ENCODE measurements at regions of chr9 and their contacts with region 1.

Region 1: DNA sequence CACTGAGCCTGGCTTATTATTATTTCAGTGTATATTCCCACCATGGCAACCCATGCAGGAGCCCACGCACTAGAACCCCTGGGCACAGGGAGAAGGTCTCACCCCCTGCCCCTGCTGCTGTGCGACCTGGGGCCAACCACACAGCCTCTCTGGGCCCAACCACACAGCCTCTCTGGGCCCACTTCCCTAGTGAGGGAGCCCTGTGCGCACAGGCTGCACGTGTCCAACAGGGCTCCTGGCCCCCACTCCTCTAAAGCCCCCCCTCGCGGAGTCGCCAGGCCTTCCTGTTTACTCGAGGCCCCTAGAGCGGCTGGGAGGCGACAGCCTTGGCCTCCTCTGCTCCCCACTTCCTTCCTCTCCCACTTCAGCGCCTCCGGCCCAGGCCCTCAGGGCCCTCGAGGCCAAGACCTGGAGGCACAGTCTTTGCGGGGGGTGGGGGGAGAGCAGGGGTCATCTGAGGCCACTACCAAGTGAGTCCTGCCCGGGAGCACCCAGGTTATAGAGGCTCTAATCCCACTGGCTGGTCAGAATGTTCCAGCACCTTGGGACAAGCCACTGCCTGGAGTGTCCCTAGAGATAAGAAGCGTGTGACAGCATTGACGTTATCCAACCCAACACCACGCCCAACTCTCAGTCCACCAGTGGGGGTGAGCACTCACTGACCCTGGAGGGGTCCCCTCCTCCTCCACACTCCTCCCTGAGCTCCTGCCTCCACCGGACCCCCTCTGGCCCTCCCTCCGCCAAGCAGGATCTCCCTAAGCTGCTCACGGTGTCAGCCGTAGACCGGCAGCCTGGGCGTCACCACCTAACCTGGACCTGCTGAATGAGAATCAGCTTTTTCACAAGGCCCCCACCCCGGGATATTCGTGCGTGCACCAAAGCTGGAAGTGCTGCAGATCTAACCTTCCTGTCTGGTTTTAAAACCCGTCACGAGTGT is 7.9 kb upstream of the ENG start:
- H3K4me3 Mint-ChIP-seq: no peak overlapping the region
- H3K27ac Mint-ChIP-seq: peak overlapping the region; percentile 88
- H3K4me1 Mint-ChIP-seq: peaks cover 58% of the 10 kb centered on the region
- H3K27me3 Mint-ChIP-seq: peaks cover 2% of the 10 kb centered on the region

Region 2: DNA sequence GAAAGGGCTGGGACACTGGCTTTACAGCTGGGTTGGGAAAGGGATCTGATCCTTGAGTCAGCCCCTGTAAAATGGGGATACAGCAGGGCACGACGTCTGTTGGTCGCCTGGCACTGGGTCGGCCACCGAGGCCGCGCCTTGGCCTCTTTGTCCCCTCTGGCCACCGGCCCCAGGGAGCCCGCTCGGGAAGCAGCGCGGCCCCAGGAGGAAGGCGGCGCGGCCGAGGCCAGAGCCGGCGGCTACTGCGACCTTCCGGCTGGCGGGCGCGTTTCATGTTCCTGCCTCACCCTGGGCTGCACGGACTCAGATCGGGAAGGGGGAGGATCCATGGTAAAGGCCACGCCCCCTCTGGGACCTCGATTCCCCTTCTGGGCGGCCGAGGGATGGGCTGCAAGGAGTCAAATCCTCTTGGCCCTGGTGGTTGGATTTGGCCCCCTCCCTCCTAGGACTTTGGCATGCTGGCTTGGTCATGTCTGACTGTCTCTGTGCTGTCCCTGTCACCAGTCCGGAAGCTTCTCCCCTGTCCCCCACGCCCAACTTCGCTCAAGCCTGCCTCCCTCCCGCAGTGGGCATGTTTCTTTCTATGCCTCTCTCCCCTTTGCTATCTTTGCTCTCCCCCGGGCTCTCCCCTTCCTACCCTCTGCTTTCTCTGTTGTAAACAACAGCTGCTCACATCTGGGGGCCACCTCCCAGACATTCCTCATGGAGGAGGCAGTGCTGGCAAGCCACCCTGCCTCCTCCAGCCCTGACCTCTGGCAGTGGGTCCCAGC is 33.9 kb before region 1 on chr9:
- intact Hi-C with region 1: loop called (anchors 5 kb)
- H3K4me3 Mint-ChIP-seq: peak overlapping the region; percentile 49
- H3K27ac Mint-ChIP-seq: peak overlapping the region; percentile 89
- H3K4me1 Mint-ChIP-seq: peaks cover 36% of the 10 kb centered on the region
- H3K27me3 Mint-ChIP-seq: no peaks in the 10 kb centered on the region